Activated T-helper 1 cell treated with anti-CD3 and anti-CD28 coated beads, Interleukin-12 subunit alpha, Interleukin-12 subunit beta, Interleukin-2, Interleukin-4 antibody, amounts not matched to agents 30 ng/mL and 10 ng/mL and 1 ng/mL, durations not matched to agents 14 hours and 24 hours and 36 hours (primary cell): ENCODE measurements at regions of chr14 and their contacts with region 1.

Region 1: DNA sequence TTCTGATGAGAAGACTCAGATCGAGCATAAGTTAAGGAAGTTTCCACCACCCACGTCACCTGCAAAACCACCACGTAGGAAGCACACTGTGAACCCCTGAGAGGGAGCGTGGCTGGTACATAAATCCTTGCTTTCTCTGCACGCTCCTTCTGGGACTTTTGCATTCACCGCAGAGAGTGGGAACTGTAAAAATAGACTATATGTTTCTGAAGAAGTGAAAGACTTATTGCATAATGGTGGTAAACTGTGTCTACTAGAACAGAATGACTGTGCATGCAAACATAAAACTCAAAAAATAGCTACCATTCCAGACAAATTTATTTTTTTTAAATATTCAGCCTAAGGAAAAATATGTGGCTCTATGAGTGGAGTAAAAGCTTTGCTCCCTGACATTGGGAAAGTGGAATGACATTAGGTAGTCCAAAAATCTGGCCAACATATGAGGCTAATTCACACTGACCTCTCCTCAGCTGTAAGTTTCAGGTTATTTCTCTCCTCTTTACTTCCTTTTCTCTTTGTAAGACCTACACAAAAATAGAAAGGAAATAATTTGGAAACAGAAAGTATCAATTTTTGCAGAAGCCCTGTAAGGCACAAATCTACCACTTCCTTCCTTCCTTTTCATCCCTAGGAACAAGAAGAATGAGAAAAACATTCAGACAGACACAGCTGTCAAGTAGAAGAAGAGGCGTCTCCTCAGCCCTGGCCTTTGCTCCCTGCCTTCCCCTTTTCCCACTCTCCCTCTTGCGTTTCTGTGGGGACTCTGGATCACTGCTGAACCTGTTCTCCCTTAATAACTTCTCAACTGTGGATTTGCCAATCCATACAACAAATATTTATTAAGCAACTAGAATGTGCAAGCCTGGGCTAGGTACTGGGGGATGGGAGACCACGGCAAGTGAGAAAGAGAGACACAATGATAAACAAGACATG is 264.3 kb upstream of the FOXN3 start:
- DNase-seq: peak; percentile 22
- H3K4me3 Mint-ChIP-seq: peak overlapping the region; percentile 66
- H3K27ac Mint-ChIP-seq: peak overlapping the region; percentile 89
- H3K4me1 Mint-ChIP-seq: peaks cover 45% of the 10 kb centered on the region
- H3K27me3 Mint-ChIP-seq: no peaks in the 10 kb centered on the region

Region 2: GRCh38 chr14:89509891-89510290 is 171.5 kb before region 1 on chr14:
- intact Hi-C with region 1: loop called (anchors 5 kb)
- DNase-seq: no peak
- H3K4me3 Mint-ChIP-seq: peak overlapping the region; percentile 76
- H3K27ac Mint-ChIP-seq: peak overlapping the region; percentile 93
- H3K4me1 Mint-ChIP-seq: peaks cover 63% of the 10 kb centered on the region
- H3K27me3 Mint-ChIP-seq: no peaks in the 10 kb centered on the region

Region 3: GRCh38 chr14:89641495-89642175 is 39.7 kb before region 1 on chr14:
- intact Hi-C with region 1: loop called (anchors 1 kb)
- DNase-seq: peak; percentile 41
- H3K4me3 Mint-ChIP-seq: peak overlapping the region; percentile 59
- H3K27ac Mint-ChIP-seq: peak overlapping the region; percentile 87
- H3K4me1 Mint-ChIP-seq: peaks cover 59% of the 10 kb centered on the region
- H3K27me3 Mint-ChIP-seq: no peaks in the 10 kb centered on the region

Region 4: GRCh38 chr14:89720741-89721315 is 39.5 kb after region 1 on chr14:
- intact Hi-C with region 1: loop called (anchors 1 kb)
- DNase-seq: peak; percentile 59
- H3K4me3 Mint-ChIP-seq: peak overlapping the region; percentile 49
- H3K27ac Mint-ChIP-seq: peak overlapping the region; percentile 86
- H3K4me1 Mint-ChIP-seq: peaks cover 64% of the 10 kb centered on the region
- H3K27me3 Mint-ChIP-seq: no peaks in the 10 kb centered on the region

Region 5: DNA sequence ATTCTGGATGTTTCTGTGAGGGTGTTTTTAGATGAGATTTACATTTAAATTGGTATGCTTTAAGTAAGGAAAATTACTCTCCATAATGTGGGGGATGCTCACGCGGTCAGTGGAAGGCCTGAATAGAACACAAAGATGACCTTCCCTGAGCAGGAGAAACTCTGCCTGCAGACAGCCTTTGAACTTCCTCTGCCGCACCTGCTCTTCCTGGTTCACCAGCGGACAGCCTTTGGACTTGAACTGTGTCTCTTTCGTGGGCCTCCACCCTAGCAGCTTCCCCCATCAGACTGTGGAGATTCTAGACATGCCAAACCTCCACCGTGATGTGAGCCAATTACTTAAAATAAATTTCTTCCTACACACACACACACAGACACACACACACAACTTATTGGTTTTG is 62.5 kb after region 1 on chr14:
- intact Hi-C with region 1: no loop called
- DNase-seq: no peak
- H3K4me3 Mint-ChIP-seq: no peak overlapping the region
- H3K27ac Mint-ChIP-seq: no peak overlapping the region
- H3K4me1 Mint-ChIP-seq: peaks cover 8% of the 10 kb centered on the region
- H3K27me3 Mint-ChIP-seq: no peaks in the 10 kb centered on the region

Region 6: DNA sequence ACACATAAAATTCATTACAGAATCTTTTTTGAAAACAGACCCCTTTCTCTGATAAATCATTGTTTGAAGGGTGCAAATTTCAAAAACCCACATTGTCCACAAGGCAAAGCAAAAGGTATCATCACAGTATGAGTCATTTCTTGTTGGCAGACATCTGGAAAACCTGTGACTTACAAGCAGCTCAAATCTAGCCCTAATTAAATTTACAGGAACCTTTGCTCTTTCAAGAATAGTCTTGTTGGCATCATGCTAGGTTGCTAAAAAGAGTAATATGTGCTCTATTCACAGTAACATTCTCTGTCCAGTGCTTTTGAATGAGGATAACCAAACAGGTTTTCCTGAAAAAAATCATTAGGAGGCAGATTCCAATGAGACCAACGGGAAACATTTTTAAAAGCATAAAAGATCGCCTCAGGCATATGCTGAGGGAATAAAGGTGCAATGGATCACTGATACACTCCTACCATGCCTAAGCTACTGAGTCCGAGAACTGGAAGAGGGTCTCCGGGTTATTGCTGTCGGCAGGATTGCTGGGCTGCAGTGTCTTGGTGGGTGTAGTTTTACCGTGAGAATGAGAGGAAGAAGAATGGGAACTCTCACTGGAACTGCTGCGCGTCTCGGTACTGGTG is 1190.4 kb after region 1 on chr14:
- intact Hi-C with region 1: no loop called
- DNase-seq: no peak
- H3K4me3 Mint-ChIP-seq: no peak overlapping the region
- H3K27ac Mint-ChIP-seq: no peak overlapping the region
- H3K4me1 Mint-ChIP-seq: peaks cover 7% of the 10 kb centered on the region
- H3K27me3 Mint-ChIP-seq: no peaks in the 10 kb centered on the region